Posterior cingulate gyrus (tissue), 11 donors: ENCODE measurements at regions of chr2 and their contacts with region 1.

Region 1: DNA sequence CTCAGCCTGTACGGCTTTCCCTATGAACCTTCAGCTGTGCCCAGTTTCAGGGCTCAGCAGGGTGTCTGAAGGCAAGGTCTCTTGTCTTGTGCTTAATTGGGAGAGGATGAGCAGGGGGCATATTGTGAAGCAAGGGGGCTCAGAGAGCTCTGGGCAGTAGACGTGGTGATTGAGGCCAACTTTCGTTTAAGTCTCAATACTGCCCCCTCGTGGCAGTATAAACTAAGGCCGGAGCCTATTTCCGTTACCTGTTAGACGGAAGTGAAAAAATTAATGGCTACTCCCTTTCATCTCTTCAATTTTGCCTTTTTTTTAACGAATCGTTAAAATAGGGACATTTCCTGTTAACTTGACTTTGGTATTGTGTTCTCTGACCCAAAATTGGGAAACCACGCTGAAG is 193.4 kb downstream of the TDRD15 start:
- DNase-seq: peak in 7 of 10 donors; percentile 23 to 86 (median 59)

Region 2: GRCh38 chr2:20862850-20863249 is 454.3 kb before region 1 on chr2:
- intact Hi-C with region 1: no loop called
- DNase-seq: no peak

Region 3: DNA sequence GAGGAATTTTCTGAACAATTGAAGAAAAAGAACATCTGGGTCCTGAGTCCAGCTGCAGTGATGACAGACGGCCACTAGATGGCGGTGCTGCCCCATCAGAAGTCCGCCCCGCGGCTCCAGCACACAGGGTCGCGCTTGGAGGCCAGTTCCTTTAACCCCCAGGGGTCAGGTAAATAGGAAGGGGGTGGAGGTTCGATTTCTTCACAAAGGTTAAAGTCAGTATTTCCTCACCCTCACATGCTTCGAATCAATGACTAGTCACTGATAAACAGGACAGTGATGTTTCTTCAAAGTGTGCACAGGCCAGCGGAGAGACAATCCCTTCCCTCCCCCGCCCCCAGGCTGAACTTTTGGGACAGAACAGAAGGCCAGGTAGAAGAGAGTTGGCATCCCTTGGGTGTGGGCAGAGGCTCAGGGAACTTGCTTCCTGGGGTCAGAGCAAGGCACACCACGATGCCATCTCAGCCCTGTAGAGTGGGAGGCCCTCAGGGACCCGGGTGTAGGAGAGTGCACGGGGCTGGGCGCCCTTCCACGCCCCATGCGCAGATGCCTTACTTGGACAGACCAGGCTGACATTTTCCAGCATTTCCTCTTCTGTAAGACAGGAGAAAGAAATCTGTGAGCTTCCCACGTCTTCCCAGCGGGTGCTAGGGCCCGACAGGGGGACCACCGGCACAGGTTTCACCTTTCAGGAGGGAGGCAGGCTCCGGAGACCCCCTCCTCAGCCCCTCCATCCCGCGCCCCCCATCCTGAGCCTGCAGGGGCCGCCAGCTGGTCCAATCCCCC is 274.0 kb before region 1 on chr2:
- intact Hi-C with region 1: loop called (anchors 5 kb)
- DNase-seq: peak; percentile 49 to 95 (median 74)

Region 4: GRCh38 chr2:21175895-21176646 is 141.1 kb before region 1 on chr2:
- intact Hi-C with region 1: loop called (anchors 1 kb)
- DNase-seq: no peak

Region 5: DNA sequence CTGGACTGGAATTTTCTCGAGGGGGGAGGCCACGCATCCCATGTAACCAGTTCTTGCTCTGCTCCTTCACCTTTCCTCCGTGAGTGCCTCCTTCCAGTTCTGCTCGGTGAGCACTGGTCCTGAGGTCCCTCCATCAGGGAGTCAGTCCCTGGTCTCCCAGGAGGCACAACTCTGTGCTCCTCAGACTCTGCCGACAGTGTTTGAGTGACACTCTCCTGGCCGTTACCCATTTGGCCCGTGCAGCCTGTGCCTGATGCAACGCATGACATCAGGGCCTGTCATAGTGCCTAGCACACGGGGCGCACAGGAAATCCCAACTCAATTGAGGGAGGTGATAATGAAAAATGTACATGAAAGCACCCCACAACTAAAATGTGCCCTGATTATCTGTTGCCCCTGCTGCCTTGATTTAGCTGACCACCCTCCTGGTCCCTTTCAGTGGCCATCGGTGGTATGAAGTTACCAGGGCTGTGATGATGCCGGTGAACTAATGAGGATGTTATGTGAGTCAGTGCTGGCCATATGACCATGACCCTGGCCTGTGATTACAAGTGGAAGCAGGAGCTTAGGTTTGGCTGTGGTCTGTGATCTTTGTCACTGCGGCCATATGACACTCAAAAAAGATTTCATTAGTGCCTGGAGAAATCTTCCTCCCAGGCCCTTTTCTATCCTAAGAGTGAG is 48.8 kb before region 1 on chr2:
- intact Hi-C with region 1: loop called (anchors 10 kb)
- DNase-seq: peak in 4 of 10 donors; percentile 32 to 91 (median 59)